Activated CD8-positive, alpha-beta T cell treated with anti-CD3 and anti-CD28 coated beads for 36 hours (primary cell): ENCODE measurements at regions of chr22 and their contacts with region 1.

Region 1: GRCh38 chr22:45553351-45554039 is 50.8 kb downstream of the FBLN1 start:
- DNase-seq: peak; percentile 73
- ATAC-seq: peak; percentile 73
- H3K4me3 Mint-ChIP-seq: no peak overlapping the region
- H3K27ac Mint-ChIP-seq: no peak overlapping the region
- H3K4me1 Mint-ChIP-seq: no peaks in the 10 kb centered on the region
- H3K27me3 Mint-ChIP-seq: peaks cover 3% of the 10 kb centered on the region
- CTCF ChIP-seq: peak; percentile 79

Region 2: DNA sequence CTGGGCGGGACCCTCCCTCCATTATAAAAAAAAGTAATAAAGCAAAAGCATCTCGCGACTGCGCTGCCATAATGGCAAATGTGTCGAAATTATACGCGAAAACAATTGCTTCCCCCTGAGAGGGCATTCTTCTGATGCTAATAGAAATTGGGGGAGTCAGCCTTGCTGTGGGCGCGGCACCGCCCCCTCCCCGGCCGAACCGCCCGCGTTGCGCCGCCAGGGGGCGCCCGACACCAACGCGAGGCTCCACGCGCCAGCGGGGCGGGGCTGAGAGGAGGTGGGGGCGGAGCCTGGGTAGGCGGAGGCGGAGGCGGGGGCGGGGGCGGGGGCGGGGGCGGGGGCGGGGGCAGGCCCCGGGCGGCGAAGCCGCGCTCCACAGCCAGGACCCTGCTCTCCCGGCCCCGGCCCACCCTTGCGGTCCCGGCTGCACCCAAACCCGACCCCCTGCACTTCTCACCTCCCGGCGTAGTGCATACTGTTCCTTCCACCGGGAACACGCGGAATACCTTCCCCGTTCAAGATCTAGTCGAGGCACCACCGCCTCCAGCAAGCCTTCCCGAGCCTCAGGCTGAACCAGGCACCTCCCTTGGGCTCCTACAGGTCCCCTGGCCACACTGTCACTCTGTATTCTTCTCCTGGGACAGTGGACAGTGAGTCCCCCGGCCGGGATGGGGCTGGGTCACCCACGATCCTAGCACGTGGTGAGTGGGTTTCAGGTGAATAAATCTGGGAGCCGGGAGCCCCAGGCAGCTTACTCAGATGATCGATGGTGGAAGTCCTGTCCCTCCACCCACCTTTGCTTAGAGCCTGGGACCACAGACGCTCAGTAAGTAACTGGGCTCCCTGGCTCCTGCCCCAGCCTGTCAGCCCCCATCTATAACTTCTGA is 284.3 kb before region 1 on chr22:
- CTCF ChIA-PET with region 1: interaction called, 3 read pairs
- POLR2A ChIA-PET with region 1: no interaction called
- intact Hi-C with region 1: loop called (anchors 10 kb)
- DNase-seq: peak; percentile 83
- ATAC-seq: peak; percentile 93
- H3K4me3 Mint-ChIP-seq: peak overlapping the region; percentile 68
- H3K27ac Mint-ChIP-seq: peak overlapping the region; percentile 24
- H3K4me1 Mint-ChIP-seq: peaks cover 6% of the 10 kb centered on the region
- H3K27me3 Mint-ChIP-seq: peaks cover 13% of the 10 kb centered on the region
- CTCF ChIP-seq: peak; percentile 93

Region 3: GRCh38 chr22:45441138-45441537 is 112.4 kb before region 1 on chr22:
- CTCF ChIA-PET with region 1: interaction called, 8 read pairs
- POLR2A ChIA-PET with region 1: no interaction called
- intact Hi-C with region 1: loop called (anchors 10 kb)
- DNase-seq: peak; percentile 54
- ATAC-seq: peak; percentile 87
- H3K4me3 Mint-ChIP-seq: peak overlapping the region; percentile 46
- H3K27ac Mint-ChIP-seq: peak overlapping the region; percentile 30
- H3K4me1 Mint-ChIP-seq: peaks cover 10% of the 10 kb centered on the region
- H3K27me3 Mint-ChIP-seq: peaks cover 2% of the 10 kb centered on the region
- CTCF ChIP-seq: peak; percentile 47

Region 4: DNA sequence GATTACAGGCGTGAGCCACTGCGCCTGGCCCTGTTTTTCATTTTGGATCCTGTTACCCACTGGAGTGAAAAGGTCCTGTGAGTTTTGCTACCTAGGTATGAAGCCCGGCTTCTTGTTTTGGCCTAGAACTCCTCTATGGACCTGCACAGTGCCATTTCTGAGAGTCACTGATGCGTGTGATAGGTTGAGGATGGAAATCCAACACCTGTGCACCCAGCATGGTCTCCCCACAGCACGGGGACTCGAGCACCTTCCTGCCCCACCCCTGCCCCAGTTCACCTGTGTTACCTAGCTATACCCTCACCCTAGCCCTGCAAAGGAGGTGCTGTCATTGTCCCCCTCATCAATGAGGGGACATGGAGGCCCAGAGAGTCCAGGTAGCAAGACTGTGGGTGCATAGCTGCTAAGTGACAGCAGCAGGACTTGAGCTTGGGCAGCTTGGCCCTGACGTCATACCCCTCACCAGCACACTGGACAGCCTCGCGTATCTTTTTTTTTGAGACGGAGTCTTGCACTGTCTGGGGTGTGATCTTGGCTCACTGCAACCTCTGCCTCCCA is 45.6 kb before region 1 on chr22:
- CTCF ChIA-PET with region 1: interaction called, 4 read pairs
- POLR2A ChIA-PET with region 1: no interaction called
- intact Hi-C with region 1: loop called (anchors 2 kb)
- DNase-seq: no peak
- ATAC-seq: no peak
- H3K4me3 Mint-ChIP-seq: no peak overlapping the region
- H3K27ac Mint-ChIP-seq: no peak overlapping the region
- H3K4me1 Mint-ChIP-seq: peaks cover 5% of the 10 kb centered on the region
- H3K27me3 Mint-ChIP-seq: peaks cover 31% of the 10 kb centered on the region
- CTCF ChIP-seq: no peak

Region 5: DNA sequence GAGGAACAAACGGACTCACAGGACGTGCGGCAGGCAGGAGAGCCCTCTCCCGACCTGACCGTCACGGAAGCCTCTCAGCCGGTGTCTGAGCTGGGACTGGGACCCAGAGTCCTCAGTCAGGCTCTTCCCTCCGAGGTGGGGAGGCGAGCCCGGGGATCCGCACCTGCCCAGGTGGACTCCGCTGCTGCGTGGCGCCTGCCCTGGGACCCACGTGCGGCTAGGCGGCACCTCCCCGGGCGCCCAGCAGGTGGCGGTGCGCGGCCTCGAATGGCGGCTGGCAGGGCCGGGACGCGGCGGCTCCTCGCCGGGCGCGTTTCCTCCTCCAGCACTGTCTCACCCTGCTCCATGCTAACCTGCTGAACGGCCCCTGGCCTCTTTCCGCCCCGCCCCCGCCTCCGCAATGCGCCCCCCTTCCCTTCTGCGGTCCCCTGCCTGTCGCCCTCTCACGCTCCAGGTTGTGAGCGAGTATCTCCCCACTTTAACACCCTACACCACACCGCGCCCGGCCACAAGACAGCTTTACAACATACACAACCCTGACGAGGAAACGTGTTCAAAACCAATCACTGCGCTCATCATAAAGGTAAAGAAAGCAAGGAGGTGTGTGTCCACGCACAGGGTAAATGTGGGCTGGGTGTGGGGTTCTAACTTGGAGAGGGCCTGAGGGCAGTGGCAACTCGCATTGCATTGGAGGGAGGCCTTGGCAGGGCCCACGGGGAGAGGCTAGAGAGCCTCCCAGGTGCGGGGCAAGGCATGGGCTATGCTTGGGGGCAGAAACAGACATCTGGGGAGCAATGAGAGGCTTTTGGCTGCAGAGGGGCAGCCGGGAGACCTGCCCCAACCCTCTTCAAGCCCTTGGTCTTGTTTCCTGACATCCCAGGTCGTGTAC is 92.3 kb after region 1 on chr22:
- CTCF ChIA-PET with region 1: no interaction called
- POLR2A ChIA-PET with region 1: no interaction called
- intact Hi-C with region 1: no loop called
- DNase-seq: peak; percentile 84
- ATAC-seq: peak; percentile 97
- H3K4me3 Mint-ChIP-seq: peak overlapping the region; percentile 9
- H3K27ac Mint-ChIP-seq: no peak overlapping the region
- H3K4me1 Mint-ChIP-seq: peaks cover 16% of the 10 kb centered on the region
- H3K27me3 Mint-ChIP-seq: peaks cover 18% of the 10 kb centered on the region
- CTCF ChIP-seq: peak; percentile 97